B cell (primary cell): ENCODE measurements at regions of chr1 and their contacts with region 1.

Region 1: GRCh38 chr1:154558575-154559465 is at the start of gene UBE2Q1:
- DNase-seq: peak; percentile 100
- ATAC-seq: peak; percentile 84
- H3K4me3 ChIP-seq: peak within 1 kb of the TSS; percentile 69 to 90 (median 81)
- H3K4me3 Mint-ChIP-seq: peak within 1 kb of the TSS; percentile 96
- H3K27ac ChIP-seq: peak within 1 kb of the TSS; percentile 85
- H3K27ac Mint-ChIP-seq: peak within 1 kb of the TSS; percentile 95
- H3K4me1 ChIP-seq: peaks cover 18 to 29% of the 10 kb centered on the region in 2 donors
- H3K4me1 Mint-ChIP-seq: peaks cover 33% of the 10 kb centered on the region
- H3K27me3 ChIP-seq: no peaks in the 10 kb centered on the region
- H3K27me3 Mint-ChIP-seq: no peaks in the 10 kb centered on the region
- CTCF ChIP-seq: no peak
- total RNA-seq, gene UBE2Q1: 97.9 and 108 TPM in 2 replicates

Region 2: GRCh38 chr1:154272217-154272998 is 286.4 kb before region 1 on chr1 and contains the start of gene HAX1:
- CTCF ChIA-PET with region 1: no interaction called
- POLR2A ChIA-PET with region 1: interaction called, 4 read pairs
- intact Hi-C with region 1: loop called (anchors 1 kb)
- DNase-seq: peak; percentile 99
- ATAC-seq: peak; percentile 91
- H3K4me3 ChIP-seq: peak within 1 kb of the TSS; percentile 88 to 99 (median 90)
- H3K4me3 Mint-ChIP-seq: peak within 1 kb of the TSS; percentile 90
- H3K27ac ChIP-seq: peak within 1 kb of the TSS; percentile 90 to 93
- H3K27ac Mint-ChIP-seq: peak within 1 kb of the TSS; percentile 94
- H3K4me1 ChIP-seq: peaks cover 14 to 21% of the 10 kb centered on the region in 2 donors
- H3K4me1 Mint-ChIP-seq: peaks cover 34% of the 10 kb centered on the region
- H3K27me3 ChIP-seq: no peaks in the 10 kb centered on the region
- H3K27me3 Mint-ChIP-seq: no peaks in the 10 kb centered on the region
- CTCF ChIP-seq: peak; percentile 82
- total RNA-seq, gene HAX1: 74.2 and 85.7 TPM in 2 replicates

Region 3: GRCh38 chr1:154520333-154520732 is 38.5 kb before region 1 on chr1:
- CTCF ChIA-PET with region 1: no interaction called
- POLR2A ChIA-PET with region 1: no interaction called
- intact Hi-C with region 1: no loop called
- DNase-seq: no peak
- ATAC-seq: no peak
- H3K4me3 ChIP-seq: no peak overlapping the region
- H3K4me3 Mint-ChIP-seq: no peak overlapping the region
- H3K27ac ChIP-seq: no peak overlapping the region
- H3K27ac Mint-ChIP-seq: no peak overlapping the region
- H3K4me1 ChIP-seq: no peaks in the 10 kb centered on the region
- H3K4me1 Mint-ChIP-seq: no peaks in the 10 kb centered on the region
- H3K27me3 ChIP-seq: peaks cover 0 to 12% (median 3%) of the 10 kb centered on the region in 4 experiments
- H3K27me3 Mint-ChIP-seq: peaks cover 37% of the 10 kb centered on the region
- CTCF ChIP-seq: no peak

Region 4: GRCh38 chr1:154581766-154582165 is 22.9 kb after region 1 on chr1:
- CTCF ChIA-PET with region 1: interaction called, 13 read pairs
- POLR2A ChIA-PET with region 1: no interaction called
- intact Hi-C with region 1: no loop called
- DNase-seq: no peak
- ATAC-seq: no peak
- H3K4me3 ChIP-seq: no peak overlapping the region
- H3K4me3 Mint-ChIP-seq: no peak overlapping the region
- H3K27ac ChIP-seq: no peak overlapping the region
- H3K27ac Mint-ChIP-seq: no peak overlapping the region
- H3K4me1 ChIP-seq: peaks cover 4 to 18% of the 10 kb centered on the region in 2 donors
- H3K4me1 Mint-ChIP-seq: peaks cover 16% of the 10 kb centered on the region
- H3K27me3 ChIP-seq: no peaks in the 10 kb centered on the region
- H3K27me3 Mint-ChIP-seq: no peaks in the 10 kb centered on the region
- CTCF ChIP-seq: no peak

Region 5: DNA sequence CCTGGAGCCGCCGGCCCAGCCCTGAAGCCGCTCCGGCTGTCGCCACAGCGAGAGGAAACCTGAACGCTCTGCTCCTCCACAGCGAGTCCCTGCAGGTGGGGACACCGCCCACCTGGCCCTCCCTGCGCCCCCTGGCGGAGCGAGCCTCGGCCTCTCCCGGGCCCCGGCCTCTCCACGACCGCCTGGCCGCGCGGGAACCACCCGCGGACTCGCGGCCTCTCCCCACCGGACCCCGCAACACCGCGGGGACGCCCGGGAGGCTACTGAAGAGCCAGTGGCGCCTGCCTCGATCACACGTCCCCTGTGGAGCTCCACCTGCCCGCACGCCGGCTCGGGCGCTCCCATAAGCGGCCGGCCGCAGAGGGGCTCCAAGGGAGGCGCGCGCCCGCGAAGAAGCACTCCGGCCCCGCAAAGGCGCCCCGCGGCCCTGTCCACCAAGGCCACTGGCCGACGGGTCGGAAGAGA is 201.7 kb after region 1 on chr1:
- CTCF ChIA-PET with region 1: interaction called, 62 read pairs
- POLR2A ChIA-PET with region 1: no interaction called
- intact Hi-C with region 1: loop called (anchors 1 kb)
- DNase-seq: peak; percentile 85
- ATAC-seq: peak; percentile 95
- H3K4me3 ChIP-seq: peak overlapping the region in 3 of 5 experiments; percentile 28 to 35 (median 31)
- H3K4me3 Mint-ChIP-seq: no peak overlapping the region
- H3K27ac ChIP-seq: no peak overlapping the region
- H3K27ac Mint-ChIP-seq: no peak overlapping the region
- H3K4me1 ChIP-seq: peaks cover 3 to 9% of the 10 kb centered on the region in 2 donors
- H3K4me1 Mint-ChIP-seq: no peaks in the 10 kb centered on the region
- H3K27me3 ChIP-seq: peaks cover 0 to 28% (median 7%) of the 10 kb centered on the region in 4 experiments
- H3K27me3 Mint-ChIP-seq: peaks cover 41% of the 10 kb centered on the region
- CTCF ChIP-seq: peak; percentile 90

Region 6: GRCh38 chr1:154961497-154962262 is 402.9 kb after region 1 on chr1 and contains the start of gene PYGO2:
- CTCF ChIA-PET with region 1: no interaction called
- POLR2A ChIA-PET with region 1: no interaction called
- intact Hi-C with region 1: loop called (anchors 2 kb)
- DNase-seq: peak; percentile 93
- ATAC-seq: peak; percentile 86
- H3K4me3 ChIP-seq: peak within 1 kb of the TSS; percentile 62 to 91 (median 81)
- H3K4me3 Mint-ChIP-seq: peak within 1 kb of the TSS; percentile 91
- H3K27ac ChIP-seq: peak within 1 kb of the TSS; percentile 76 to 96
- H3K27ac Mint-ChIP-seq: peak within 1 kb of the TSS; percentile 94
- H3K4me1 ChIP-seq: peaks cover 22 to 35% of the 10 kb centered on the region in 2 donors
- H3K4me1 Mint-ChIP-seq: peaks cover 28% of the 10 kb centered on the region
- H3K27me3 ChIP-seq: no peaks in the 10 kb centered on the region
- H3K27me3 Mint-ChIP-seq: no peaks in the 10 kb centered on the region
- CTCF ChIP-seq: peak; percentile 82
- total RNA-seq, gene PYGO2: 47.5 and 52.7 TPM in 2 replicates

Region 7: GRCh38 chr1:155084722-155085503 is 526.1 kb after region 1 on chr1:
- CTCF ChIA-PET with region 1: interaction called, 22 read pairs
- POLR2A ChIA-PET with region 1: interaction called, 3 read pairs
- intact Hi-C with region 1: loop called (anchors 1 kb)
- DNase-seq: peak; percentile 97
- ATAC-seq: peak; percentile 73
- H3K4me3 ChIP-seq: peak overlapping the region; percentile 48 to 80 (median 76)
- H3K4me3 Mint-ChIP-seq: peak overlapping the region; percentile 91
- H3K27ac ChIP-seq: peak overlapping the region; percentile 77 to 79
- H3K27ac Mint-ChIP-seq: peak overlapping the region; percentile 93
- H3K4me1 ChIP-seq: peaks cover 59 to 62% of the 10 kb centered on the region in 2 donors
- H3K4me1 Mint-ChIP-seq: peaks cover 48% of the 10 kb centered on the region
- H3K27me3 ChIP-seq: peaks cover 0 to 46% (median 38%) of the 10 kb centered on the region in 4 experiments
- H3K27me3 Mint-ChIP-seq: peaks cover 30% of the 10 kb centered on the region
- CTCF ChIP-seq: peak; percentile 87